Activated T-helper 1 cell treated with anti-CD3 and anti-CD28 coated beads, Interleukin-12 subunit alpha, Interleukin-12 subunit beta, Interleukin-2, Interleukin-4 antibody, amounts not matched to agents 30 ng/mL and 10 ng/mL and 1 ng/mL, durations not matched to agents 14 hours and 24 hours and 36 hours (primary cell): ENCODE measurements at regions of chr3 and their contacts with region 1.

Region 1: DNA sequence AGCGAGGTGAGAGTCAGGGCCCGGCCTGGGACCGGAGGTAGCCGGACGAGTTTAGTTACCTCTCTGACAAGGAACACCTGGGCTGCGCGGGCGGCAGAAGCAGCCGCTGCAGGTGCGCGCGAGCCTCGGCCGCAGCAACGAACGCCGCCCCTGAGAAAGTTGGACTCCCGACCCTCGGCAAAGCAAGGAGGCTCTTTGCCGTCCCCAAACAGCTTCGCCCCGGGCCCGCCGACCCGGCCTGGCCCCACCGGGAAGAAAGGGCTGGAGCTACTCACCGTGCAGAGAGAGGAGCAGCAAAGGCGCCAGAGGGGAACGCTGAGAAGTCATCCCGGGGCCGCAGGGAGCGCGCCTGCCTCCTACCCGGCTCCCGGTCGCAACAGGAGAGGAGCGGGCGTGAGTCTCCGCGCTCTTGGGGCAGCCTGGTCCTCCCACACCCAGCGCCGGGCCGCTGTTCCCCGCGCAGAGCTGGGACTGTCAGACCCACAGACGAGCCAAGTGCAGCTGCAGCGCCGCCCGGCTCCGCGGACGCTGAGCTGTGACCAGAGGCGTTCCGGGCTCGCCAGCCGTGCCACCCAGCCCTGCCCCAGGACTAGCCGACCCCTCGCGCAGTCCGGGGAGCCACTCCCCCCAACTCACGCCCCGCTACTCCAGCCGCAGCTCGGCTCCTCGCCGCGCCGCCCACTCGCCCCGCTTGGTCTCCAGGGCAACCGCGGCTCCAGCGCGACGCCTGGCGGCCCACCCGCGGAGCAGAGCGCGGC is at the start of gene IGSF11:
- DNase-seq: peak; percentile 46
- H3K4me3 Mint-ChIP-seq: peak within 1 kb of the TSS; percentile 83
- H3K27ac Mint-ChIP-seq: no peak within 1 kb of the TSS
- H3K4me1 Mint-ChIP-seq: peaks cover 6% of the 10 kb centered on the region
- H3K27me3 Mint-ChIP-seq: peaks cover 54% of the 10 kb centered on the region
- total RNA-seq, gene IGSF11: 0.18 TPM in 1 of 2 replicates, not detected in the other

Region 2: GRCh38 chr3:118938183-118938961 is 96.1 kb before region 1 on chr3:
- intact Hi-C with region 1: loop called (anchors 5 kb)
- DNase-seq: no peak
- H3K4me3 Mint-ChIP-seq: no peak overlapping the region
- H3K27ac Mint-ChIP-seq: no peak overlapping the region
- H3K4me1 Mint-ChIP-seq: peaks cover 26% of the 10 kb centered on the region
- H3K27me3 Mint-ChIP-seq: no peaks in the 10 kb centered on the region

Region 3: DNA sequence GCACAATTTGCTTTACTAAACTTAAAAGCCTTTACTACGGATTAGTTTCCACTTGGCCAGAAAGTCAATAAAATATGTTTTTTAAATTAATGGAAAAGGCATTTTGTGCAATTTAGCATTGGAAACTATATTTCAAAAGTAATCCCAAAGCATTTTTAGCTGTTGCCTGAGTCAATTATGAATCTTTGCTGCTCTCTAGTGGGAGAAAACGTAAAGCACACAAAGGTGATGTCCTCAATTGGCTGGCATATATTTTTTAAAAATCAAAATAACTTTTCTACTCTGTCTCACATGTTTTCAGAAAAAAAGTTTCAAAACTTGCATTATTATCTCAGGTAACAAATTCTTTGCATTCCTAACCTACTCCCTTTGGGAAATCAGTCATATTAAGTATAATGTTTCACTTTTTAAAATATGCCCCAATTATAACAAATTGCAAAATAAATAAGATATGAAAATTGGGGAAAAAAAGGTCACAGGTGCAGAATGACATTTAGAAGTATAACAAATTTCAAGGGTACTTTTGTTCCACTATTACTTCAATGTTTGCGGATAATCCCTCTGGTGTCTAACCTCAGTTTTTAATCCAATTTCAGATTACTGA is 64.3 kb after region 1 on chr3:
- intact Hi-C with region 1: loop called (anchors 2 kb)
- DNase-seq: no peak
- H3K4me3 Mint-ChIP-seq: no peak overlapping the region
- H3K27ac Mint-ChIP-seq: no peak overlapping the region
- H3K4me1 Mint-ChIP-seq: no peaks in the 10 kb centered on the region
- H3K27me3 Mint-ChIP-seq: peaks cover 2% of the 10 kb centered on the region